ENCODE measurements at regions of chr12 and their contacts with region 1.

Region 1: DNA sequence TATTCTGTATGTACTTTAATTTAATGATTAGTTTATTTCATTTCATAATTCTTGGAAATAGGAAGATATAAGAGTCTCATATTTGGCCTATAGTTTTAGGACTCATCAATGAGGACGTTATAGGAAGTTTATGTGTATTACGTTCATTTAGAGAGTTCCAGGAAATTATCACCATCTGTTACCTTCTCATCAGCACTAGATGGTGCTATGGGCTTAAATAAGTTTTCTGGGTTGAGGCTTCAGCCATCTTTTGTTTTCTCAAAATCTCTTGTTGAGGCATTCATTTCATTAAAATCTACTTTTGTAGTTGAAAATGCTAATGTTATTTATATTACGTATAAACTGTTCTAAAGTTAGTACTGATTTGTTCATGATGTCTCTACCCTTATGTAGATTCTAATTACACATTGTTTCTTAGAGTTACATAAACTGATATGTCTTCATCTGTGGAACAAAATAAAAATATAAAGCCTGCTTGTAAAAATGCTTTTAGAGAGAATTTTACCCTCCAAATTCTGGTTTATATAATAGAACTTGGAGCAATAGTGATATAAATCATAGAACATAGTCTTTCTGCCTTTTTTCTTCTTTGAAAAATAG is 89.2 kb downstream of the CFAP54 start:
- DNase-seq: peak; percentile 56
- H3K4me3 ChIP-seq: no peak overlapping the region
- H3K27ac ChIP-seq: no peak overlapping the region
- H3K4me1 ChIP-seq: no peaks in the 10 kb centered on the region
- H3K27me3 ChIP-seq: no peaks in the 10 kb centered on the region
- CTCF ChIP-seq: peak; percentile 30 to 39
- POLR2A ChIP-seq: no peak

Region 2: DNA sequence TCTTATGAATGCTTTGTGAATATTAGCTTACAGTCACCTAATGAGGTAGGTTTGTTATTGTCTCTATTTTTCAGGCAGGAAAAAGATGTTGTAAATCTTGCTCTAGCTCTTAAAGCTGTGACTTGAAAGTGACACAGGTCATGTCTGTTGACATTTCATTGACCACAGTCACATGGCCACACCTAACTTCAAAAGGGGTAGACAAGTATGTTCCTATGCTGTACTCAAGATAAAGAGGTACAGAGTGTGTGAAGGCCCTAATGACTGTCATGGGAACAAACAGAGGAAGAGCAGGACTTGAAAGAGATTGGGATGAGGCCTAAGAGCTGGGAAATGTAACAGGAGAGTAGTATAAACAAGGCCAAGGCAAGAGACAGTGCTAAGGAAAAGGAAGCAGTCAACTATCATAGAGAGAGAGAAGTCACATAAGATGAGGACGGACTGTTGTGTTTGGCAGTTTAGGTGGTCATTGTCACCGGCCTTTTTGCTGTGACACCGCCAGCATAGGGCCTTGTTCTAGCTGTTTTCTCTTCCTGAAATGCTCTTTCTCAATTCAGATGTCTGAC is 91.8 kb after region 1 on chr12:
- CTCF ChIA-PET with region 1: no interaction called
- POLR2A ChIA-PET with region 1: no interaction called
- dilution Hi-C with region 1: no loop called
- intact Hi-C with region 1: no loop called
- DNase-seq: no peak
- H3K4me3 ChIP-seq: no peak overlapping the region
- H3K27ac ChIP-seq: no peak overlapping the region
- H3K4me1 ChIP-seq: no peaks in the 10 kb centered on the region
- H3K27me3 ChIP-seq: no peaks in the 10 kb centered on the region
- CTCF ChIP-seq: no peak
- POLR2A ChIP-seq: no peak

Region 3: GRCh38 chr12:96729886-96730285 is 151.3 kb after region 1 on chr12:
- CTCF ChIA-PET with region 1: no interaction called
- POLR2A ChIA-PET with region 1: no interaction called
- dilution Hi-C with region 1: no loop called
- intact Hi-C with region 1: no loop called
- DNase-seq: no peak
- H3K4me3 ChIP-seq: no peak overlapping the region
- H3K27ac ChIP-seq: no peak overlapping the region
- H3K4me1 ChIP-seq: no peaks in the 10 kb centered on the region
- H3K27me3 ChIP-seq: no peaks in the 10 kb centered on the region
- CTCF ChIP-seq: no peak
- POLR2A ChIP-seq: no peak

Region 4: GRCh38 chr12:96906849-96907670 is 328.4 kb after region 1 on chr12 and contains the start of gene NEDD1:
- CTCF ChIA-PET with region 1: no interaction called
- POLR2A ChIA-PET with region 1: no interaction called
- dilution Hi-C with region 1: no loop called
- intact Hi-C with region 1: loop called (anchors 1 kb)
- DNase-seq: peak; percentile 82
- H3K4me3 ChIP-seq: peak within 1 kb of the TSS; percentile 77 to 92 (median 90)
- H3K27ac ChIP-seq: peak within 1 kb of the TSS; percentile 49
- H3K4me1 ChIP-seq: peaks cover 19% of the 10 kb centered on the region
- H3K27me3 ChIP-seq: no peaks in the 10 kb centered on the region
- CTCF ChIP-seq: no peak
- POLR2A ChIP-seq: peak; percentile 86
- total RNA-seq, gene NEDD1: 25.4 and 26.8 TPM in 2 replicates

Region 5: GRCh38 chr12:97148941-97149559 is 570.4 kb after region 1 on chr12:
- CTCF ChIA-PET with region 1: no interaction called
- POLR2A ChIA-PET with region 1: no interaction called
- dilution Hi-C with region 1: no loop called
- intact Hi-C with region 1: loop called (anchors 10 kb)
- DNase-seq: peak; percentile 31
- H3K4me3 ChIP-seq: no peak overlapping the region
- H3K27ac ChIP-seq: no peak overlapping the region
- H3K4me1 ChIP-seq: peaks cover 20% of the 10 kb centered on the region
- H3K27me3 ChIP-seq: no peaks in the 10 kb centered on the region
- CTCF ChIP-seq: peak; percentile 65 to 75
- POLR2A ChIP-seq: no peak

Region 6: DNA sequence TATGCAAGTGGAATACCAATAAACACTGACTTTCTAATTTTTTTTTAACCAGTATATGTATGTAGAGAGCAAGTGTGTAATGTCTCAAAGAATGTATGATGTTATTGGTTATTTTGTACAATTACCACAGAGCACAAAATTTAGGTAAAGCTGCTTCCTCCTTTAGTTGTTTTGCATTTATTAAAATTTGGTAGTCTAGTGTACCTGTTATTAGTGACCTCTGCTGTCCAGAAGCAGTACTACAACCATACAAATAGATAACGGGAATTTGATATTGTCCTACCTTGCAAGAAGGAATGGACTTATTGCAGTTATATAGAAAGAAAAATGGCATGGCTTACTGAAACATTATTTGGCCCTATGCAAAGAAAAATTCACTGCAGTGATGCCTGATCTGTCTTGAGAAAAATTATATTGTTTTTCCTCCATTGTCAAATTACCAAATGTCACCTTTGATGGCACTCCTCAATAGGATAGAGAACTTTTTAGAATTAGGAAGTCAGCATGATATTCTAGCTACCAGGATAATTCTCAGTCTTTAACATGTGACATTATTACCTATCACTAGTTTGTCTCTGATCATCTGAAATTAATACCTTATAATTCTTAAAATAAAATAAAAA is 730.1 kb after region 1 on chr12:
- CTCF ChIA-PET with region 1: no interaction called
- POLR2A ChIA-PET with region 1: no interaction called
- dilution Hi-C with region 1: no loop called
- intact Hi-C with region 1: loop called (anchors 2 kb)
- DNase-seq: peak; percentile 77
- H3K4me3 ChIP-seq: no peak overlapping the region
- H3K27ac ChIP-seq: no peak overlapping the region
- H3K4me1 ChIP-seq: no peaks in the 10 kb centered on the region
- H3K27me3 ChIP-seq: peaks cover 0 to 1% of the 10 kb centered on the region in 2 experiments
- CTCF ChIP-seq: peak; percentile 37 to 50
- POLR2A ChIP-seq: no peak

Region 7: GRCh38 chr12:97404543-97404942 is 825.9 kb after region 1 on chr12:
- CTCF ChIA-PET with region 1: no interaction called
- POLR2A ChIA-PET with region 1: no interaction called
- dilution Hi-C with region 1: no loop called
- intact Hi-C with region 1: loop called (anchors 1 kb)
- DNase-seq: peak; percentile 44
- H3K4me3 ChIP-seq: no peak overlapping the region
- H3K27ac ChIP-seq: no peak overlapping the region
- H3K4me1 ChIP-seq: no peaks in the 10 kb centered on the region
- H3K27me3 ChIP-seq: no peaks in the 10 kb centered on the region
- CTCF ChIP-seq: peak; percentile 58 to 65
- POLR2A ChIP-seq: no peak

Measured in endothelial cell of umbilical vein (primary cell).